Spleen (tissue), 13 donors: ENCODE measurements at regions of chr10 and their contacts with region 1.

Region 1: DNA sequence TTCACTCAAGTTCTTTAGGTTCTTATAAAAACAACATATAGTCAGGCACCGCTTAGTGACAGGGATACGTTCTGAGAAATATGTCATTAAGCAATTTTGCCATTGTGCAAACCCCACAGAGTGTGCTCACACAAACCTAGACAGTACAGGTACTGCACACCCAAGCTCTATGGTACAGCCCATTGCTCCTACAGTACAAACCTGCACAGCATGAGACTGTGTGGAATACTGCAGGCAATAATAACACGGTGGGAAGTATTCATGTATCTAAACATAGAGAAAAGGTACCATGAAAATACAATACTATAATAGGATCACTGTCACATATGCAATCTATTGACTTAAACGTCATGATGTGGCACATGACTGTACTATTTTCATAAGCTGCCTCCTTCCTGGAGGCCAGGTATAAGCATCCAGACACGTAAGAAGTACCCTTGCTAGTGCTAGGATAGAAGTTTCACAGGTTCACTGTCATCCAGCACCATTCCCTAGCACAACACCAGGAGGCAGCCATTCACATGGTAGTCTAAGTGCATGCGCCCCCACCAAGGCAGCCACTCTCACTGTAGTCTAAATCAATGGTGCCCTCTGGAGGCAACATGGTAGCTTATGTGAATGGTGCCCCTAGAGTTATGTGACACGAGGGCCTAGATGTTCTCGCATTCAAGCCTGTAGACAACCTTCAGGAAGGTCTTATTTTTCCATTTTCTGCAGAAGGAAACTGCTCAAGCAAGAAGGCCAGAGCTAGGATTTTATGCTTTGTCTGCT is 98.5 kb downstream of the ARHGAP22 start:
- DNase-seq: no peak
- H3K4me3 ChIP-seq: no peak overlapping the region
- H3K27ac ChIP-seq: no peak overlapping the region
- H3K4me1 ChIP-seq: peaks cover 0 to 17% (median 5%) of the 10 kb centered on the region in 6 donors
- H3K27me3 ChIP-seq: no peaks in the 10 kb centered on the region
- CTCF ChIP-seq: no peak
- POLR2A ChIP-seq: no peak

Region 2: GRCh38 chr10:48363617-48364355 is 142.5 kb before region 1 on chr10:
- intact Hi-C with region 1: loop called (anchors 10 kb)
- DNase-seq: no peak
- H3K4me3 ChIP-seq: no peak overlapping the region
- H3K27ac ChIP-seq: no peak overlapping the region
- H3K4me1 ChIP-seq: peaks cover 4 to 39% (median 21%) of the 10 kb centered on the region in 6 donors
- H3K27me3 ChIP-seq: no peaks in the 10 kb centered on the region
- CTCF ChIP-seq: peak in 9 of 11 experiments; percentile 13 to 63 (median 47)
- POLR2A ChIP-seq: no peak

Region 3: GRCh38 chr10:48456361-48456804 is 49.9 kb before region 1 on chr10:
- intact Hi-C with region 1: no loop called
- DNase-seq: peak; percentile 87
- H3K4me3 ChIP-seq: peak overlapping the region in 1 of 8 donors; percentile 35
- H3K27ac ChIP-seq: no peak overlapping the region
- H3K4me1 ChIP-seq: peaks cover 0 to 16% (median 12%) of the 10 kb centered on the region in 6 donors
- H3K27me3 ChIP-seq: peaks cover 0 to 21% (median 0%) of the 10 kb centered on the region in 7 donors
- CTCF ChIP-seq: no peak
- POLR2A ChIP-seq: no peak